T-cell (primary cell): ENCODE measurements at regions of chr1 and their contacts with region 1.

Region 1: GRCh38 chr1:9010781-9011323 is 15.4 kb downstream of the SLC2A7 start:
- DNase-seq: no peak
- ATAC-seq: no peak
- H3K4me3 ChIP-seq: no peak overlapping the region
- H3K4me3 Mint-ChIP-seq: no peak overlapping the region
- H3K27ac ChIP-seq: no peak overlapping the region
- H3K27ac Mint-ChIP-seq: no peak overlapping the region
- H3K4me1 ChIP-seq: no peaks in the 10 kb centered on the region
- H3K4me1 Mint-ChIP-seq: peaks cover 0 to 8% (median 2%) of the 10 kb centered on the region in 3 donors
- H3K27me3 ChIP-seq: peaks cover 0 to 38% of the 10 kb centered on the region in 2 experiments
- H3K27me3 Mint-ChIP-seq: peaks cover 0 to 14% of the 10 kb centered on the region in 2 donors

Region 2: GRCh38 chr1:9135073-9135836 is 124.4 kb after region 1 on chr1:
- CTCF ChIA-PET with region 1: no interaction called
- POLR2A ChIA-PET with region 1: no interaction called
- DNase-seq: no peak
- ATAC-seq: no peak
- H3K4me3 ChIP-seq: no peak overlapping the region
- H3K4me3 Mint-ChIP-seq: no peak overlapping the region
- H3K27ac ChIP-seq: no peak overlapping the region
- H3K27ac Mint-ChIP-seq: no peak overlapping the region
- H3K4me1 ChIP-seq: no peaks in the 10 kb centered on the region
- H3K4me1 Mint-ChIP-seq: peaks cover 0 to under 1% (median under 1%) of the 10 kb centered on the region in 3 donors
- H3K27me3 ChIP-seq: peaks cover 0 to 3% of the 10 kb centered on the region in 2 experiments
- H3K27me3 Mint-ChIP-seq: peaks cover 3 to 4% of the 10 kb centered on the region in 2 donors

Region 3: DNA sequence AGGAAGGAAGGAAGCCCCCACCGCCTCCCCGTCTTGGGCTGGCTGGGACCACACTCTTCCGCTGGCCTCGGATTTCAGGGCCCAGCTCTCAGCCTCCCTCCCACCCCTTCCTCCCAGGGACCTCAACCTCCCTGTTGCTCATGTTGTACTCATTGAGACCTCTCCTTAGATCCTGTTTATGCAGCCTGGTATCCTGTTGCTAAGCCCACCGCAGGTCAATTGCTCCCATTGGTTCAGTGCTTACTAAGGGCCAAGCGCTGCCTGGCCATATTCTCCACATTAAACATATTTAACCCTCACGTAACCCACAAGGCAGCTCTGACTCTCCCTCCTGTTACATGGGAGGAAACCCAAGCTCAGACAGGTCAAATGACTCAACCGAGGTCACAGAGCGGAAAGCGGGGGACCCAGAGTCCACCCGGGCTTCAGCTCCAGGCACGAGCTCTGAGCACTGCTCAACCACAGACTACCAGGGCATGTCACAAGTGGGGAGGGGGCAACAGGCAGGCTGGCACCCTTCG is 200.5 kb after region 1 on chr1:
- CTCF ChIA-PET with region 1: no interaction called
- POLR2A ChIA-PET with region 1: no interaction called
- DNase-seq: no peak
- ATAC-seq: no peak
- H3K4me3 ChIP-seq: no peak overlapping the region
- H3K4me3 Mint-ChIP-seq: no peak overlapping the region
- H3K27ac ChIP-seq: no peak overlapping the region
- H3K27ac Mint-ChIP-seq: no peak overlapping the region
- H3K4me1 ChIP-seq: no peaks in the 10 kb centered on the region
- H3K4me1 Mint-ChIP-seq: no peaks in the 10 kb centered on the region
- H3K27me3 ChIP-seq: peaks cover under 1 to 38% of the 10 kb centered on the region in 2 experiments
- H3K27me3 Mint-ChIP-seq: peaks cover 20 to 44% of the 10 kb centered on the region in 2 donors

Region 4: GRCh38 chr1:9350013-9350908 is 339.4 kb after region 1 on chr1:
- CTCF ChIA-PET with region 1: no interaction called
- POLR2A ChIA-PET with region 1: no interaction called
- DNase-seq: no peak
- ATAC-seq: no peak
- H3K4me3 ChIP-seq: no peak overlapping the region
- H3K4me3 Mint-ChIP-seq: no peak overlapping the region
- H3K27ac ChIP-seq: no peak overlapping the region
- H3K27ac Mint-ChIP-seq: no peak overlapping the region
- H3K4me1 ChIP-seq: no peaks in the 10 kb centered on the region
- H3K4me1 Mint-ChIP-seq: peaks cover 0 to 5% (median 2%) of the 10 kb centered on the region in 3 donors
- H3K27me3 ChIP-seq: no peaks in the 10 kb centered on the region
- H3K27me3 Mint-ChIP-seq: no peaks in the 10 kb centered on the region

Region 5: DNA sequence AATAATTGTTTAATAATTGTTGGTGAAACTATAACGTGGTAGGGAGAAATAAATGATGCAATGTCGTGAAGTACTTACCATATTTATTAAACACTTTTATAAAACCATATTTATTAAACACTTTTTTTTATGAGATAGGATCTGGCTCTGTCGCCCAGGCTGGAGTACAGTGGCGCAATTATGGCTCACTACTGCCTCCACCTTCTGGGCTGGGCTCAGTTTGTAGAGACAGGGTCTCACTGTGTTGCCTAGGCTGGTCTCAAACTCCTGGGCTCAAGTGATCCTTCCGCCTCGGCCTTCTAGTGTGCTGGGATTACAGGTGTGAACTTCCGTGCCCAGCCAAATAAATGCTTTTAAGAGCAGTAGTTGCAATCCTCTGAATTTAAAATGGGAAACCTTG is 1312.0 kb after region 1 on chr1:
- CTCF ChIA-PET with region 1: no interaction called
- POLR2A ChIA-PET with region 1: interaction called in 1 of 2 experiments, 10 read pairs
- DNase-seq: no peak
- ATAC-seq: no peak
- H3K4me3 ChIP-seq: no peak overlapping the region
- H3K4me3 Mint-ChIP-seq: no peak overlapping the region
- H3K27ac ChIP-seq: no peak overlapping the region
- H3K27ac Mint-ChIP-seq: no peak overlapping the region
- H3K4me1 ChIP-seq: no peaks in the 10 kb centered on the region
- H3K4me1 Mint-ChIP-seq: peaks cover 0 to 16% (median 2%) of the 10 kb centered on the region in 3 donors
- H3K27me3 ChIP-seq: no peaks in the 10 kb centered on the region
- H3K27me3 Mint-ChIP-seq: no peaks in the 10 kb centered on the region